Gastrocnemius medialis (tissue), 4 donors: ENCODE measurements at regions of chr19 and their contacts with region 1.

Region 1: GRCh38 chr19:3387645-3388589 is 21.5 kb downstream of the NFIC start:
- DNase-seq: peak; percentile 93 to 98
- ATAC-seq: peak; percentile 50 to 58
- H3K4me3 ChIP-seq: peak overlapping the region in 3 of 4 donors; percentile 14 to 34 (median 28)
- H3K27ac ChIP-seq: peak overlapping the region; percentile 98 to 100 (median 98)
- H3K4me1 ChIP-seq: peaks cover 73 to 86% of the 10 kb centered on the region in 2 donors
- H3K27me3 ChIP-seq: no peaks in the 10 kb centered on the region
- CTCF ChIP-seq: no peak
- POLR2A ChIP-seq: peak; percentile 67 to 68

Region 2: GRCh38 chr19:3369337-3370213 is 18.3 kb before region 1 on chr19:
- in situ Hi-C with region 1: no loop called
- intact Hi-C with region 1: loop called (anchors 1 kb)
- DNase-seq: peak; percentile 67 to 83
- ATAC-seq: peak; percentile 5 to 18
- H3K4me3 ChIP-seq: peak overlapping the region; percentile 87 to 99 (median 96)
- H3K27ac ChIP-seq: peak overlapping the region; percentile 98 to 100 (median 98)
- H3K4me1 ChIP-seq: peaks cover 44 to 57% of the 10 kb centered on the region in 2 donors
- H3K27me3 ChIP-seq: no peaks in the 10 kb centered on the region
- CTCF ChIP-seq: peak in 1 of 5 experiments; percentile 13
- POLR2A ChIP-seq: peak; percentile 85 to 93

Region 3: DNA sequence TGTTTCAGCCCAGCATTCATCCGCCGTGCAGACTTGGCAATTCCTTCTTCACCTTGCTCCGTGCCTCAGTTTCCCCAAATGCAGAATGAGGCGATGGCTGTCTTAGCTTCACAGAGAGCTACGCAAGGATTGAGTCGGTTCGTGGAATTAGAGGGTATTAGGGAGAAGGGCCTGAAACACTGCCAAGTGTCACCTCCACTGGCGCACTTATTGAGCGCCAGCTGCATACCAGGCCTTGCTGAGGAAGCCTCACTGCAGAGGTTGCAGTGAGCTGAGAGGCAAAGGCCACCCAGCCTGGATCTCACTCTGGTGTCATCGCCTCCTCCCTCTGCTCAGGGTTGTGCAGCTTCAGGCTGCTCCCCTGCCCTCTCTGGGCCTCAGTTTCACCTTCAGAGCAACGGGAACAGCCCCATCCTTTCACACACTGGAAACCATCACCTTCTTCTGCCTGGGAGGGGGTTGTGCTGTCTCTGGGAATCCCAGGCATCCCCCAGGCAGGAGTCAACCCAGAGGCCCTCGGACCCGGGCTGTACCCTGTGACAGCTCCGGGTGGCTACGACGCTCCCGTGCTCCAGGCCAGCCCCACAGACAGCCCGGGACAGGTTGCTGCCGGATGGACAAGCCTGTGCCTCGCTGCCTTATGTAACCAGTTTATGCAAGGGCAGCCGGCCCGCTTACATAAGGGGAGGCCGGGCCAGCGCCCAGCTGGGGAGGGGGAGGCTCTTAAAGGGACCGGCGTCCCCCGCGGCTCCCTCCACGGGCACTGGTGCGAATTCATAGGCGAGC is 10.4 kb after region 1 on chr19:
- in situ Hi-C with region 1: no loop called
- intact Hi-C with region 1: loop called (anchors 1 kb)
- DNase-seq: peak; percentile 60 to 88
- ATAC-seq: peak; percentile 28 to 47
- H3K4me3 ChIP-seq: peak overlapping the region; percentile 32 to 48 (median 35)
- H3K27ac ChIP-seq: peak overlapping the region; percentile 98 to 100 (median 98)
- H3K4me1 ChIP-seq: peaks cover 51 to 64% of the 10 kb centered on the region in 2 donors
- H3K27me3 ChIP-seq: no peaks in the 10 kb centered on the region
- CTCF ChIP-seq: no peak
- POLR2A ChIP-seq: peak in 1 of 2 donors; percentile 41

Region 4: DNA sequence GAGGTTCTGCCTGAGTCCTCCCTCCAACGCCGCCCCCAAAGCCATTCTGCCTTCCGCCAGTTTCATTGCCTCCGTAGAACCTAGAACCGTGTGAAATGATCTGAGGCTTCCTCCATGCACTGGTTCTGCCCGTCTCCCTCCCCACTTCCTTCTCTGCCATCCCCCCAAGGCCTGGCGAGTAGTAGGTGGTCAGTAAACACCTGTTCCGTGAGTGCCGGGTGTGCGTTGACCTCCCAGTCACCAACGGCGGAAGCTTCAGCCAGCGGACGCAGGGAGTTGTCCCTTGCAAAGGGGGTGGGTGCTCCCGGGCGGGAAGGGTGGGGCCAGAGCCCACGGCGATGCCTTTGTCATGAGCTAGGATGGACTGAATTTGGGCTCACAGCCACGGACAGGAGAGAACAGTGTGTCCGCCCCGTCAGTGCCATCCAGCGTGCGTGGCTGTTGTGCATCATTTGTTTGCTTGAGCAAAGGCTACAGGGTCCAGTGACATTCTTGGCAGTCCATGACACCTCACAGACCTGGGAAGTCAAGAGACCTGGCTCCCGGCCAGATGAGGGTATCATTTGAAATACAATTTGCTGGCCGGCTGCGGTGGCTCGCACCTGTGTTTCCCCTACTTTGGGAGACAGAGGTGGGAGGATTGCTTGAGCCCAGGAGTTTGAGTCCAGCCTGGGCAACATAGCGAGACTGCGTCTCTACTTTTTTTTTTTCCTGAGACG is 21.6 kb after region 1 on chr19:
- in situ Hi-C with region 1: no loop called
- intact Hi-C with region 1: loop called (anchors 1 kb)
- DNase-seq: peak; percentile 99 to 100
- ATAC-seq: peak; percentile 73 to 74
- H3K4me3 ChIP-seq: peak overlapping the region; percentile 53 to 73 (median 58)
- H3K27ac ChIP-seq: peak overlapping the region; percentile 98 to 100 (median 98)
- H3K4me1 ChIP-seq: peaks cover 69 to 86% of the 10 kb centered on the region in 2 donors
- H3K27me3 ChIP-seq: no peaks in the 10 kb centered on the region
- CTCF ChIP-seq: no peak
- POLR2A ChIP-seq: peak; percentile 88 to 92